Endothelial cell of umbilical vein (primary cell): ENCODE measurements at regions of chr1 and their contacts with region 1.

Region 1: GRCh38 chr1:84298328-84298683 is 3.2 kb upstream of the SAMD13 start:
- DNase-seq: peak; percentile 61
- H3K4me3 ChIP-seq: peak overlapping the region; percentile 72 to 94 (median 78)
- H3K27ac ChIP-seq: peak overlapping the region; percentile 75
- H3K4me1 ChIP-seq: peaks cover 46% of the 10 kb centered on the region
- H3K27me3 ChIP-seq: no peaks in the 10 kb centered on the region
- CTCF ChIP-seq: no peak
- POLR2A ChIP-seq: peak; percentile 73

Region 2: DNA sequence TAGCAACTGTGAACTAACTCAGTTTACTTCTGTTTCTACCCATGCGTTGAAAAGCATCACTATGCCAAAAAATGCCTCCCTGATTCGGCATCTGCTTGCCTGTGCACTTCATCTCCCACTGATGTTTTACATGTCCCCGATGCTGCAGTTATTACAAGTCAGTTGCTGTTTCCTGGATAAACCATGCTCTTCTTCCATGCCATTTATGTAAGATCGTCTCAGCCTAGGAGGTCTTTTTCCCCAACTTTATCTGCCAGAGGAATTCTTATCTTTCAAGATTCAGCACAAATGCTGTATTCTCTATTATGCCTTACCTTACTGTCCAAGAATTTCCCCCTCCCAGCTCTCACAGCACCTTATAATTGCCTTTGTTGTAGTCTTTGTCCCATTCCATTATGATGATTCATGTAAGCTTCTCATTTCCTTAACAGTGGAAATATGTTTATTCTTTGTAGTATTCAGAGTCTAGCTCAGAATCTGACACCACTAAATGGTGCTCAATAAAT is 124.2 kb before region 1 on chr1:
- CTCF ChIA-PET with region 1: no interaction called
- POLR2A ChIA-PET with region 1: no interaction called
- dilution Hi-C with region 1: no loop called
- intact Hi-C with region 1: loop called (anchors 2 kb)
- DNase-seq: peak; percentile 88
- H3K4me3 ChIP-seq: peak overlapping the region in 1 of 3 experiments; percentile 48
- H3K27ac ChIP-seq: peak overlapping the region; percentile 100
- H3K4me1 ChIP-seq: peaks cover 64% of the 10 kb centered on the region
- H3K27me3 ChIP-seq: no peaks in the 10 kb centered on the region
- CTCF ChIP-seq: no peak
- POLR2A ChIP-seq: no peak

Region 3: DNA sequence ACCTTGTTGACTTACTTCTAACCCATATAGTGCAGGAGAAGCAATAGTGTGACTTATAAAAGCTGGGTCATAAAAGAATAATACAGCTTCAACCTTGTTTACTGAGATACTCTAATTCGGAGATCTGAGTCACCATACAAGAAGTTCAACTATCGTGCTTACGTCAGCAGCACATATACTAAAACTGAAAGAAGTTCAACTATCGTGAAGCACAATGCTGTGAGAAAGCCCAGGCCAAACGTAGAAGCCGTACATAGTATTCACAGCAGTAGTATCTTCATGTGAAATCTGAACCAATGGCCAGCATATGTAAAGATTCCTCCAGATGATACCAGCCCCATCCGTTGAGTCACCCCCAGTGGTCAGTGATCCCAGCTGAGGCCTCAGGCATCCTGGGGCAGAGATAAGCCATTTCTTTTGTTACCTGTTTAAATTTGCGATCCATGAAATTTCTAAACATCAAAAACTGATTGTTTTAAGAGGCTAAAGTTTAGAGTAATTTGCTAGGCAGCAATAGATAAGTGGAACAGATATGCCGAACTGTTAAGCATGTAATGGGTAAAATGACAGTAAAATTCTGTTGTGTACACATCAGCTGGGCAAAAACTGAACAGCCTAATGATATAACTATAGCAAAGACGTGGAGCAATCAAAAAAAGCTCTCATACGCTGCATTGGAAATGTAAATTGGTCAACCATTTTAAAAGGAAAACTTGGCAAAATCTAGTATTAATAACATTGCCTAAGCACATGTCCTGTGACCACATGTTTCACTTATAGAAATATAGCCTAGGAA is 50.7 kb before region 1 on chr1:
- CTCF ChIA-PET with region 1: no interaction called
- POLR2A ChIA-PET with region 1: no interaction called
- dilution Hi-C with region 1: no loop called
- intact Hi-C with region 1: loop called (anchors 1 kb)
- DNase-seq: no peak
- H3K4me3 ChIP-seq: peak overlapping the region in 1 of 3 experiments; percentile 18
- H3K27ac ChIP-seq: peak overlapping the region; percentile 90
- H3K4me1 ChIP-seq: peaks cover 35% of the 10 kb centered on the region
- H3K27me3 ChIP-seq: no peaks in the 10 kb centered on the region
- CTCF ChIP-seq: no peak
- POLR2A ChIP-seq: no peak

Region 4: DNA sequence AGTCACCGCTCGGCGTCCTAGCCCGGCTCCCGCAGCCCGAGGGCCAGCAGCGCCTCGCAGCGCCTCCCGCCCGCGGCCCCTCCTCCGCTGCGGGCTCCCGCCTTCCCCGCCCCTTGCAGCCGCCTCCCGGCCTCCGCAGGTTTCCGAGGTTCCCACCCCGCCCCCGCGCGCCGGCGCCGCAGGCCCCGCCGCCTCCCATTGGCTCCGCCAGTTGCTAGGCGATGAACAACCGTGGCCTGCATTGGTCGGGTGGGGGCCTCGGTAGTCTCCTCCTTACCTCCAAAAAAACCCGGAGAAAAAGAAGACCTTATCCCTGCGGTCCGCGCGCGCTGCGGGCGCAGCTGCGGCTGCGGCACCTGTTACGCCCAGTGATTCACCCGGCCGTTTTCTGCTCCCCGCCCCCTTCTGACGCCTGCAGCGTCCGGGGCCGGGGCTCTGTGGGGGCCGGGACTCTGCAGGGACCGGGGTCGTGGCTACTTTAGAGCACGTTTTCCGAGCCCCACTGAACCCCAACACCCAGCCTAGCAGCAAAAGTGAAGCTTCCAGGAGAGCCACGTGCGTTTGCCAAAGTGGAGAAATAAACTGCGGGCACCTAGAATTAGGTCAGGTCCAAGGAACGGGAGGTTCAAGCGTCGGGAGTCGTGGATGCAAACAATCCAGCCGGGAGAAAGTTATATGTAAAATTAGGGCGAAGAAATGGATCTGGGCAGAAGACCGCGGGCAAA is 392.3 kb after region 1 on chr1 and contains the start of gene SSX2IP:
- CTCF ChIA-PET with region 1: no interaction called
- POLR2A ChIA-PET with region 1: no interaction called
- dilution Hi-C with region 1: no loop called
- intact Hi-C with region 1: loop called (anchors 2 kb)
- DNase-seq: peak; percentile 95
- H3K4me3 ChIP-seq: peak within 1 kb of the TSS; percentile 45 to 71 (median 49)
- H3K27ac ChIP-seq: no peak within 1 kb of the TSS
- H3K4me1 ChIP-seq: peaks cover 9% of the 10 kb centered on the region
- H3K27me3 ChIP-seq: no peaks in the 10 kb centered on the region
- CTCF ChIP-seq: no peak
- POLR2A ChIP-seq: no peak
- total RNA-seq, gene SSX2IP: 6.9 and 8.4 TPM in 2 replicates